ENCODE measurements at regions of chr7 and their contacts with region 1.

Region 1: DNA sequence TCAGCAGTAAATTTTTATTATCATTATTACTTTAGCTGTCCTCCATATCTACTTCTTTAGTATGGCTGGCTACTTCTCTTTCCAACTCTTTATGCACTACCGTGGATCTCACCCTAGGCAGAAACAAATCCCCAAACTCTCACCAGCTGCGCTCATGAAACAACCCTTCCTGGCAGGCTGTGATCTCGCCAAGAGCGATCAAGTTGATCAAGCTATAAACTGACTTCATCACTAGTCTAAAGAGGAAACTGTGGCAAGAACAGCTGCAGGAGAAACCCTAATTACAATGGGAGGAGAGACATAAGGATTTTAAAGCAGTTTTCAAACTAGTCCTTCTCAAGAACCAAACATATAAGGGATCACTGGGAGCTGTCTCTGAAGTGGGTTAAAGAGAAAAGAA is 160.5 kb upstream of the PRSS58 start:
- DNase-seq: no peak
- ATAC-seq: no peak
- H3K4me3 ChIP-seq: no peak overlapping the region
- H3K4me3 Mint-ChIP-seq: no peak overlapping the region
- H3K27ac ChIP-seq: no peak overlapping the region
- H3K27ac Mint-ChIP-seq: peak overlapping the region; percentile 46
- H3K4me1 ChIP-seq: no peaks in the 10 kb centered on the region
- H3K4me1 Mint-ChIP-seq: peaks cover 6% of the 10 kb centered on the region
- H3K27me3 ChIP-seq: no peaks in the 10 kb centered on the region
- H3K27me3 Mint-ChIP-seq: no peaks in the 10 kb centered on the region
- CTCF ChIP-seq: no peak

Region 2: GRCh38 chr7:142385491-142386340 is 32.6 kb before region 1 on chr7:
- CTCF ChIA-PET with region 1: interaction called, 11 read pairs
- POLR2A ChIA-PET with region 1: no interaction called
- intact Hi-C with region 1: no loop called
- DNase-seq: peak in 5 of 9 experiments; percentile 23 to 64 (median 52)
- ATAC-seq: peak; percentile 62
- H3K4me3 ChIP-seq: no peak overlapping the region
- H3K4me3 Mint-ChIP-seq: no peak overlapping the region
- H3K27ac ChIP-seq: no peak overlapping the region
- H3K27ac Mint-ChIP-seq: no peak overlapping the region
- H3K4me1 ChIP-seq: peaks cover 18% of the 10 kb centered on the region
- H3K4me1 Mint-ChIP-seq: peaks cover 26% of the 10 kb centered on the region
- H3K27me3 ChIP-seq: no peaks in the 10 kb centered on the region
- H3K27me3 Mint-ChIP-seq: no peaks in the 10 kb centered on the region
- CTCF ChIP-seq: peak; percentile 43